BJ (cell line): ENCODE measurements at regions of chr16 and their contacts with region 1.

Region 1: GRCh38 chr16:86519649-86520316 is 9.5 kb downstream of the FOXF1 start:
- DNase-seq: no peak
- H3K4me3 ChIP-seq: no peak overlapping the region
- H3K27me3 ChIP-seq: peaks cover 3% of the 10 kb centered on the region
- CTCF ChIP-seq: peak; percentile 88

Region 2: DNA sequence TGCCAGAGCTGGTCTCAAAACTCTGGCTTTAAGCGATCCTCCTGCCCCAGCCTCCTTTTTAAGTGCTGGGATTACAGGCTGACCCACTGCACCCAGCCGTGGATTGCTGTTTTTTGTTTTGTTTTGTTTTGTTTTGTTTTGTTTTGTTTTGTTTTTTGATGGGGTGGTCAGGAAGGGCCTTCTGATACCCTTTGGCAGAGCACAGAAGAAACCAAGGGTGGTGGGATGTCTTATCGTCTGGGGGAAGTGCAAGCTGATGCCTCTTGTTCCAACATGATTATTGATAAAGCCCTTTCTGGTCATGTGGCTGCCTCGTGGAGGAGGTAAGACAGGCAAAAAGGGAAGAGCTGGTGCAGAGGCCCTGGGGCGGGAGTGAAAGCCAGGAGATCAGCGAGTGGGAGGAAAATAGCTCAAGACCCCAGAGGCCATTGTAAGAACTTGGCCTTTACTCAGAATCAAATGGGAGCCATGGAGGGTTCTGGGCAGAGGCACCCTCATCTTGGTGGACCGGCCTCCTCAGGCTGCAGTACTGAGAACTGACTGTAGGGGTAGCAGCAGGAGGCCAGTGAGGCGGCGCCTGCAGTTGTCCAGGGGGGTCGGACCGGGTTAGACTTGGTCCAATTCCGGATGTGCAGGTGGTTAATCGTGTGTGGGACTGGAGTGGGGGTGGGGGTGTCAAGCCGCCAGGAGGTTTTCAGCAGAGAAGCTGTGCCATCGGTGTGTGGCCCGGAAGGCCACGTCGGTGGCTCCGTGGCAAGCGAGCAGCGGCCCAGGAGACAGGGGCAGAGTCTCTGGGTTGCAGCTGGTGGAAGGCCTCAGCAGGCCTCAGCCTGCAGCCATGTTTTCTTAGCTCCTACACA is 991.0 kb before region 1 on chr16:
- CTCF ChIA-PET with region 1: no interaction called
- POLR2A ChIA-PET with region 1: no interaction called
- DNase-seq: no peak
- H3K4me3 ChIP-seq: no peak overlapping the region
- H3K27me3 ChIP-seq: no peaks in the 10 kb centered on the region
- CTCF ChIP-seq: peak; percentile 56

Region 3: DNA sequence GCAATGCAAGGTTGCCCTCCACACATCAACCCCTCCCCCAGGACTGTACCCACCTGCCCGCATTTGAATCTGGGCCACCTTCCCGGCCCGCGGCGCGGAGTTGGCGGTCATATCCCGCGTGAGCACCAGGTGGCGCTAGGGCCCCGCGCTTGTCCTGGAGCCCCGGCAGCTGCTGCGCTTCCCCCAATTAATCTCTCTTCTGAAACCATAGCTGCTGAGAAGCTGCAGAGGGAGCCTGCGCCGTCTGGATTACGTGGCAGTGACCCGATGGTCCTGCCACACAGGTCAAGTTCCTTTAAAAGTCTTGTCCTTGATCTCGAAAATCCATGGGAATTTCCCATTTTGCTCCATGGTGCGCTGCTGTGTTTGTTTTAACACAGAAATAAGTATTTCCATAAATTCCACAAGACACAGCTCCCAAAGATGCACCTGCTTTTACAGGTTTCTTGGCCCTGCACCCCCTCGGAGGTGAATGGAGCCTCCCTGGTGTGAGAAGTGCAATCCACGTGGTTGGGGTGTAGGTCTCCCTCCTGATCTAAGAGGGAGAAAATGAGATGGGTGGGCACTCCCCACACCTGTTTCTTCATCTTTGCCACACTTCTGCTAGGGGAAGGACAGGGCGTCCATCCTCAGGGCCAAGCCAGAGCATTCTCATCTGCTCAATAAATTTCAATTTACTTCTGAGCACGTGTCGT is 698.2 kb before region 1 on chr16:
- CTCF ChIA-PET with region 1: interaction called, 18 read pairs
- POLR2A ChIA-PET with region 1: no interaction called
- DNase-seq: no peak
- H3K4me3 ChIP-seq: no peak overlapping the region
- H3K27me3 ChIP-seq: peaks cover 15% of the 10 kb centered on the region
- CTCF ChIP-seq: peak; percentile 90

Region 4: GRCh38 chr16:86044241-86044671 is 475.5 kb before region 1 on chr16:
- CTCF ChIA-PET with region 1: interaction called, 14 read pairs
- POLR2A ChIA-PET with region 1: no interaction called
- DNase-seq: no peak
- H3K4me3 ChIP-seq: no peak overlapping the region
- H3K27me3 ChIP-seq: peaks cover 19% of the 10 kb centered on the region
- CTCF ChIP-seq: peak; percentile 63

Region 5: DNA sequence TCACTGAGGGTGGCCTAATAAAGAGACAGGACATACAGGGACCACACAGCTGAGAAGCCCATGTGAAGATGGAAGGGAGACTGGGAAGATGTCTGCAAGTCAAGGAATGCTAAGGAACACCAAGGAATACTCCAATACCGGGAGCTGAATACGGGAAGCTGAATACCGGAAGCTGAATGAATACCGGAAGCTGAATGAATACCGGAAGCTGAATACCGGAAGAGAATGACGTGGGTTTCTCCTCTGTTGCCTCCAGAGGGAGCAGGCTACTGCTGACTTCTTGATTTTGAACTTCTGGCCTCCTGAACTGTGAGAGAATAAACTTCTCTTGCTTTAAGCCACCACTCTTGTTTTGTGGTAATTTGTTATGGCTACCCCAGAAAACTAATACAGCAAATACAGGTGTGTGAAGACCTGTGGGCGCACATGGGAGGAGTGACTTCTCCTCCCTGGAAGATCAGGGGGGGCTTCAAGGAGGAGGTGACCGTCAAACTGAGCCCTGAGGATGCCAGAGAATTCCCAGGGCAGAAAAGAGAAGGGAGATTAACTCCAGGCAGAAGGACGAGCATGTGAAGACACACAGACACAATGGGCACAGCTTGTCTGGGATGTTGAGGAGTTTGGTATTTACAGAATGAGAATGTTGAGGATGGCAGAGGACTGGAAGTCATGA is 361.0 kb before region 1 on chr16:
- CTCF ChIA-PET with region 1: interaction called, 10 read pairs
- POLR2A ChIA-PET with region 1: no interaction called
- DNase-seq: no peak
- H3K4me3 ChIP-seq: no peak overlapping the region
- H3K27me3 ChIP-seq: peaks cover 8% of the 10 kb centered on the region
- CTCF ChIP-seq: no peak

Region 6: GRCh38 chr16:86300746-86301481 is 218.9 kb before region 1 on chr16:
- CTCF ChIA-PET with region 1: interaction called, 27 read pairs
- POLR2A ChIA-PET with region 1: no interaction called
- DNase-seq: no peak
- H3K4me3 ChIP-seq: no peak overlapping the region
- H3K27me3 ChIP-seq: peaks cover 7% of the 10 kb centered on the region
- CTCF ChIP-seq: no peak

Region 7: GRCh38 chr16:86314402-86315025 is 205.3 kb before region 1 on chr16:
- CTCF ChIA-PET with region 1: interaction called, 10 read pairs
- POLR2A ChIA-PET with region 1: no interaction called
- DNase-seq: no peak
- H3K4me3 ChIP-seq: no peak overlapping the region
- H3K27me3 ChIP-seq: peaks cover 8% of the 10 kb centered on the region
- CTCF ChIP-seq: no peak

Region 8: GRCh38 chr16:86383488-86384262 is 136.1 kb before region 1 on chr16:
- CTCF ChIA-PET with region 1: interaction called, 11 read pairs
- POLR2A ChIA-PET with region 1: no interaction called
- DNase-seq: no peak
- H3K4me3 ChIP-seq: no peak overlapping the region
- H3K27me3 ChIP-seq: no peaks in the 10 kb centered on the region
- CTCF ChIP-seq: no peak

Region 9: DNA sequence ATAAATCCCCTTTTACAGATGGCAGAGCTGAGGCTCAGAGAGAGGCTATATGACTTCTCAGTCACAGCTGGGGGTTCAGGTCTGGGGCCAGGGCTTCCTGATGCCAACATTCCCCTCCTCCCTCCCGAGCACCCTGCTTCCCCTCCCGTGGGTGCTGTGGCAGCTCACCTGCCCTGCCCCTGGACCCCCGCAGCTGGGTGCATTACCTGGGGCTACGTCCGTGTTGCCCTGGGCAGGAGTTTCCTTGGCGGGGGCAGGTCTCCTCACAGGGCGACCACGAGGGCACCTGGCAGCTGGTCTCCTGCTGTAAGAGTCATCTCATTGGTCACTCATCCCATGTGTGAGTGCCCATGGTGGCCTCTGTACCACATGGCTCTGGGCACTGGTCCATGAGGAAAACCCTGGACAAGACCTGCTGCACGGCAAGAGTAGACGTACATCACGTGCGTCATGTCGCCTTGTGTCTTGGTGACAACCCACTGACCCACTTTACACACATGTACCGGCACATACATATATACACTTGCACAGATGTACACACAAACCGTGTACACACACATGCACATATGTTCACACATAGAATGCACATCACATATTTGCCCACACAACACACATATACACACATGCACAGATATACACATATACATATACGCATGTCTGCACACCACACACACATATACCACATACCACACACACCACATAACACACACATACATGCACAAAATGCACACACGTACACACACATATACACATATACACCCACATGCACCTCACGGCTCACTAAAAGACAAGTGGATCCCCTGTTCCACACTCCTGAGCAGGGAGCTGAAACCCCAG is 192.6 kb after region 1 on chr16:
- CTCF ChIA-PET with region 1: no interaction called
- POLR2A ChIA-PET with region 1: no interaction called
- DNase-seq: no peak
- H3K4me3 ChIP-seq: no peak overlapping the region
- H3K27me3 ChIP-seq: peaks cover 17% of the 10 kb centered on the region
- CTCF ChIP-seq: no peak